Dendritic cell treated with granulocyte-macrophage colony-stimulating factor and Interleukin-4, amounts not matched to agents 40 ng/mL and 50 ng/mL, for 4 days (primary cell): ENCODE measurements at regions of chr2 and their contacts with region 1.

Region 1: GRCh38 chr2:190904640-190905261 is 24.1 kb downstream of the GLS start:
- H3K4me3 Mint-ChIP-seq: no peak overlapping the region
- H3K27ac Mint-ChIP-seq: no peak overlapping the region
- H3K4me1 Mint-ChIP-seq: no peaks in the 10 kb centered on the region
- H3K27me3 Mint-ChIP-seq: no peaks in the 10 kb centered on the region

Region 2: DNA sequence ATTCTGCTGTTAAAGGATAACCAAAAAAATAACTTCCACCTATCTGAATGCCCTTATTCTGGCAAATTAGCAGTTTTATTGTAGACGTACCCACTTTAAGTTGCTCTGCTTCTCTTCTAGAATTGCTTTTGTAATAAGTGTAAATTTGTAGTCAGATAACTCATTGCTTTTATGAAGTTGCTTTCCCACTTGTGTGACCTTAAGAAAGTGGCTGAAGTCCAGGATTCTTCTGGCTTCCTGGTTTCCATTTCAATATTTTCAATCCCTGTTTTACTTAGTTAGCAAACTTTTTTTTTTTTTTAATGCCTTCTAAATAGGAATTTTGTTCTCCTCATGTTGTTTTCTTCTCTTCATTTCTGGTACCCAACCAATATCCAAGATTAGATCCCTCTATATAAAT is 35.7 kb after region 1 on chr2:
- intact Hi-C with region 1: no loop called
- H3K4me3 Mint-ChIP-seq: no peak overlapping the region
- H3K27ac Mint-ChIP-seq: no peak overlapping the region
- H3K4me1 Mint-ChIP-seq: no peaks in the 10 kb centered on the region
- H3K27me3 Mint-ChIP-seq: no peaks in the 10 kb centered on the region

Region 3: DNA sequence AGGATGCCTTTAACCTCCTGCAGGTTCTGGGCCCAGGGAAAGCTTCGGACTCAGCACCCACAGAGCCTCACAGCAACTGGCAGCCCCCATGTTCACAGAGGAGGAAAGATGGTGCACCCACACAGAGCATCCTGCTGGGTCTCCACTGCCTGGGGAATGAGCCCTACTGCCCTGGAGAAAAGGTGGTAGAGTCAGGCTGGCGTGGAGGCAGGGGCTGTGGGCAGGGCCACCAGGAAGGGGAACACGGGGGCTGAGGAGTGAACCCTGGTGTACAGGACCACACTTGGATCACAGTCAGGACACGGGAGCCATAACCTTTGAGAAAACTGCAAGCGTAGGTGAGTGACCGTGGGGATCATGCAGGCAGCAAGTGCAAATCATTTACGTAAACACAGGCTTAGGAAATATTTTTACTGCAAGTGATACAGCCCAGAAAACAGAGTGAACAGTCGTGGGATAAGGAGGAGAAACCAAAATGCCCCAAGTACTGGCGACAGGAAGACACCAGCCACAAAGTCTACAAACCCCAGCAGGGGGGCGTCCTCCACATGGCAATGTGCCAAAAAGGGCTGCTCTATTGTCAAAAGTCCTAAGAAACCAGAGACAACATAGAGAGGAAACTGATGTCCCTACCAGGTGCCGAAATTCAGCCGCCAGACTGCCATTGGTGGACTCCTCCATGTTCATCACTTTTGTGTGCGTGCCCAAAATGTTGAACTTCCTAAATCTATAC is 81.6 kb after region 1 on chr2:
- intact Hi-C with region 1: loop called (anchors 5 kb)
- H3K4me3 Mint-ChIP-seq: no peak overlapping the region
- H3K27ac Mint-ChIP-seq: peak overlapping the region; percentile 72
- H3K4me1 Mint-ChIP-seq: no peaks in the 10 kb centered on the region
- H3K27me3 Mint-ChIP-seq: no peaks in the 10 kb centered on the region